IMR-90 (cell line): ENCODE measurements at regions of chr3 and their contacts with region 1.

Region 1: DNA sequence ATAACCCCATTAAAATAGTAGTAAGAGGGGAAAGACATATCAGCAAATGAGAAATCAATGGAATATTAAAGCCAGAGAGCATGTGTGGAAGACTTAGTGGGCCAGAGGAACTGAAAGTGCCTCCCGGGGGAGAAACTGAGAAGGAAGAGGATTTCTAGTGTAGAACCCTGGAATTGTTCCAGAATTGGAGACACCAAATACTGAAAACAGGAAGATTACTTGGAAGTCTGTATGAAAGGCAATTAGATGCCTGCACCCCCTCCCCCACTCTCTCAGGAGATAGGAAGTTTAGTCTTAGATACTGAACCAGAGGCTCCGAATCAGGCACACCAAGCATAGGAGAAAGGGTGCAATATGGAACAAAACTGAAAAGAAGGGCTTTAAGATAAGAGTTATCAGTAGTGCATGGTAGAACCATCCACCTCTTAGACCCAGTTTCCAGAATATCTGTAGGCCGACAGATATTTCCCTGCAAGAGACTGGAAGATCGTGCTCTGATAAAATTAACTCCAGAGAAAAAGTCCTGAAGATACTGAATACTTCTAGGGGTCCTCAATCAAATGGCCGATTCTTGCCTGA is 32.4 kb downstream of the KLHL18 start:
- DNase-seq: peak; percentile 7
- ATAC-seq: no peak
- H3K4me3 ChIP-seq: no peak overlapping the region
- H3K27ac ChIP-seq: no peak overlapping the region
- H3K4me1 ChIP-seq: peaks cover 13% of the 10 kb centered on the region
- H3K27me3 ChIP-seq: no peaks in the 10 kb centered on the region
- CTCF ChIP-seq: no peak
- POLR2A ChIP-seq: no peak
- RAD21 ChIP-seq: no peak

Region 2: GRCh38 chr3:46998121-46998851 is 316.9 kb before region 1 on chr3:
- CTCF ChIA-PET with region 1: no interaction called
- POLR2A ChIA-PET with region 1: no interaction called
- dilution Hi-C with region 1: no loop called
- in situ Hi-C with region 1: no loop called
- intact Hi-C with region 1: no loop called
- DNase-seq: peak; percentile 18
- ATAC-seq: peak; percentile 48; the same call in 1 of the 2 replicates
- H3K4me3 ChIP-seq: no peak overlapping the region
- H3K27ac ChIP-seq: no peak overlapping the region
- H3K4me1 ChIP-seq: peaks cover 5% of the 10 kb centered on the region; the same call in 1 of the 2 replicates
- H3K27me3 ChIP-seq: no peaks in the 10 kb centered on the region
- CTCF ChIP-seq: peak; percentile 63
- POLR2A ChIP-seq: no peak
- RAD21 ChIP-seq: peak; percentile 70

Region 3: DNA sequence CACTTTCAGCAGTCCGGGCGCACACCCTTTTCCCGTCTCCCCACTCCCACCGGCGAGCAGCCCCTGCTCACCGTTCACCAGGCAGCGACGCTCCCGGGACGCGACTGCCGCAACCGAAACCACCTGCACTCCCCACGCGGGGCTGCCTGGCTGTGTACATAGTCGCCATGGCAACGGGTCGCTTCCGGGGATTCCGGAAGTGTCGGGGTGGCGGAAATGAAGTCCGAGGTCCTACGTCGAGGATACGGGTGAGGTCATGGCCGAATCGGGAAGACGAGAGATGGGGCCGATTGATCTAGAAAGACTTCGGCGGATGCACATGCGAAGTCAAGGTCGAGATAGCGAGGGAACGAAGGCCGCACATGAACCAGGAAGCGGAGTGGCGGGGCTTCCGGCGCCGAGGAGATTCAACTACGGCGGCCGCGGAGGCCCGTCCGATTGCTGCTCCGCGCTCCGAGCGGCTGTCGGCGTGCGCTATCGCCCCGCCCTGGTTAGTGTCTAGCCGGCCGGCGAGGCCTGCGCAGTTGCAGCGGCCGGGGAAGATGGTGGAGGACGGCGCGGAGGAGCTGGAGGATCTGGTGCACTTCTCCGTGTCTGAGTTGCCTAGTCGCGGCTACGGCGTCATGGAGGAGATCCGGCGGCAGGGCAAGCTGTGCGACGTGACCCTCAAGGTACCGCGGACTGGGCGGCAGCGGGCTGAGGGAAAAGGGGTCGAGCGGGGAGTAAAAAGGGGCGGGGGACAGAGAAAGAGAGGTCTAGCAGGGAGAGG is 32.5 kb before region 1 on chr3 and contains the starts of genes KIF9 and KLHL18:
- CTCF ChIA-PET with region 1: no interaction called
- POLR2A ChIA-PET with region 1: no interaction called
- dilution Hi-C with region 1: no loop called
- in situ Hi-C with region 1: no loop called
- intact Hi-C with region 1: loop called (anchors 2 kb)
- DNase-seq: peak; percentile 93
- ATAC-seq: peak; percentile 97
- H3K4me3 ChIP-seq: peak within 1 kb of the TSS; percentile 60
- H3K27ac ChIP-seq: peak within 1 kb of the TSS; percentile 94
- H3K4me1 ChIP-seq: peaks cover 4% of the 10 kb centered on the region; the same call in 1 of the 2 replicates
- H3K27me3 ChIP-seq: no peaks in the 10 kb centered on the region
- CTCF ChIP-seq: no peak
- POLR2A ChIP-seq: peak; percentile 91
- RAD21 ChIP-seq: no peak
- total RNA-seq, gene KIF9: 1.8 and 3.6 TPM in 2 replicates
- total RNA-seq, gene KLHL18: 38.9 and 76.2 TPM in 2 replicates